Esophagus squamous epithelium (tissue), 5 donors: ENCODE measurements at regions of chr2 and their contacts with region 1.

Region 1: DNA sequence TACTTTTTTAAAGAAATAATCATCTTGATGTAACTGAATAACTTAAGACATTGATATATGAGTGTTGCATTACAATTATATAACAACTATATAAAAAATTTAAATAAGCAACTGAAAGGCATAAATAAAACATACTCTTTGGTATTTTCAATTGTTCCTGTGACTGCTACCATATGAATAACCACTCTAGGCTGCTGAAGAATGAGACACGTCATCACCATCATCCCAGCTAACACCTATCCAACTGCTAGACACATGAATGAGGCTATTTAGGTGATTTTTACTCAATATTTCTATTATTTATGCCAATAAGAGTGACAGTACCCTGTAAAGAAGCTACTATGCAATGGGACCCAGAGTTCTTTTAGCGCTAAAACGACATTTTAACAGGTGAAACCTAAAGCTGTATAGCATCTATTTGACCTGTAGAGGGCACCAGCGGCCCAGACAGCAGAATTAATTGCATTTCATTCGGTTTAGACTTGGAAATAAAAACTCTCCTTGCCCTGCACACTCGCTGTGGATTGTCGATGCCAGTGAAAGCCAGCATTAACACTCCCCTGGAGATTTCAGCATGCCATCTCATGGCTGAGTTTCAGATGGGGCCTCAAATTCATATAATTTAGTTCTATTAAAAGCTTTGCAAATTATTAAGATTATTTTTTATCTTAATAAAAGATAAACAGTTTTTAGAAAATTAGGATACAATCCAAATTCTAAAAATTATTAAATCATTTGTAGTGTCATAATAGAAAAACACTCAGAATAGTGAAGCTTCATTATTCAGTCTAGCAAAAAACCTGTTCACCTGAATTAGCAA is 89.4 kb upstream of the MAP2 start:
- DNase-seq: no peak
- H3K4me3 ChIP-seq: no peak overlapping the region
- H3K27ac ChIP-seq: no peak overlapping the region
- H3K4me1 ChIP-seq: peaks cover 0 to 5% (median 0%) of the 10 kb centered on the region in 3 donors
- H3K27me3 ChIP-seq: no peaks in the 10 kb centered on the region
- CTCF ChIP-seq: peak; percentile 27 to 88 (median 73)
- POLR2A ChIP-seq: no peak

Region 2: GRCh38 chr2:208847651-208848050 is 486.8 kb before region 1 on chr2:
- intact Hi-C with region 1: no loop called
- DNase-seq: no peak
- H3K4me3 ChIP-seq: no peak overlapping the region
- H3K27ac ChIP-seq: no peak overlapping the region
- H3K4me1 ChIP-seq: no peaks in the 10 kb centered on the region
- H3K27me3 ChIP-seq: no peaks in the 10 kb centered on the region
- CTCF ChIP-seq: no peak
- POLR2A ChIP-seq: no peak

Region 3: DNA sequence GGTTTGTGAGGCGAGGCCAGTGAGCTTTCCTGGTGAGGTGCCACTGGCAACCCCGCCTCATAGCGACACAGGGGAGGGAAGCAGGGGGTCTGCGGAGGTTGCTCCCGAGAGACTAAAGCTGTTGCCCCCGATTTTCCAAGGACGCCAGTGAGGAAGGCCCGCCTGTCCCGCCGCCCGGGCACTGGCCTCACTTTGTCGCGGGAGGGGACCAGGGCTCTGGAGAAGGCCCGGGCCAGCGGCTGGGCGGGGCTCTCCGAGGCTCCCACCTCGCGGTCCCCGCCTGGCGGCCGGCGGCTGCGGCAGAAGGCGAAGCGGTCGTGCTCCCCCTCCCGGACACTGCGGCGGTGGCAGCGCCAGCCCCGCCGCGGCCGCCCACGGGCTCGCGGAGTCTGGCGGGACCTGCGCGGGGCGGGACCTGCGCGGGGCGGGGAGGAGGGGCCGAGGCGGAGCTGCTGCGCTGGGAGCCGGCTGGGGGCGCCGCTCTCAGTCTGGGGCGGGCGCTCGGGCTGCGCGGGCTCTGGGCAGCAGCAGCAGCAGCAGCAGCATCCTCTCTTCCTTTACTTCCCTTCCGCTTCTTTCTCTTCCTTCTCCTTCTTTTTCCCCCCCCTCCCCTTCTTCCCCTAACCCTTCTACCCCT is 89.3 kb after region 1 on chr2 and contains the start of gene MAP2:
- intact Hi-C with region 1: loop called (anchors 5 kb)
- DNase-seq: no peak
- H3K4me3 ChIP-seq: peak within 1 kb of the TSS; percentile 53 to 69 (median 64)
- H3K27ac ChIP-seq: peak within 1 kb of the TSS; percentile 46 to 86 (median 76)
- H3K4me1 ChIP-seq: peaks cover 0 to 51% (median 16%) of the 10 kb centered on the region in 3 donors
- H3K27me3 ChIP-seq: no peaks in the 10 kb centered on the region
- CTCF ChIP-seq: peak; percentile 57 to 99 (median 94)
- POLR2A ChIP-seq: peak in 1 of 4 donors; percentile 62
- total RNA-seq, gene MAP2: 5.8 to 14.5 (median 8.8) TPM

Region 4: DNA sequence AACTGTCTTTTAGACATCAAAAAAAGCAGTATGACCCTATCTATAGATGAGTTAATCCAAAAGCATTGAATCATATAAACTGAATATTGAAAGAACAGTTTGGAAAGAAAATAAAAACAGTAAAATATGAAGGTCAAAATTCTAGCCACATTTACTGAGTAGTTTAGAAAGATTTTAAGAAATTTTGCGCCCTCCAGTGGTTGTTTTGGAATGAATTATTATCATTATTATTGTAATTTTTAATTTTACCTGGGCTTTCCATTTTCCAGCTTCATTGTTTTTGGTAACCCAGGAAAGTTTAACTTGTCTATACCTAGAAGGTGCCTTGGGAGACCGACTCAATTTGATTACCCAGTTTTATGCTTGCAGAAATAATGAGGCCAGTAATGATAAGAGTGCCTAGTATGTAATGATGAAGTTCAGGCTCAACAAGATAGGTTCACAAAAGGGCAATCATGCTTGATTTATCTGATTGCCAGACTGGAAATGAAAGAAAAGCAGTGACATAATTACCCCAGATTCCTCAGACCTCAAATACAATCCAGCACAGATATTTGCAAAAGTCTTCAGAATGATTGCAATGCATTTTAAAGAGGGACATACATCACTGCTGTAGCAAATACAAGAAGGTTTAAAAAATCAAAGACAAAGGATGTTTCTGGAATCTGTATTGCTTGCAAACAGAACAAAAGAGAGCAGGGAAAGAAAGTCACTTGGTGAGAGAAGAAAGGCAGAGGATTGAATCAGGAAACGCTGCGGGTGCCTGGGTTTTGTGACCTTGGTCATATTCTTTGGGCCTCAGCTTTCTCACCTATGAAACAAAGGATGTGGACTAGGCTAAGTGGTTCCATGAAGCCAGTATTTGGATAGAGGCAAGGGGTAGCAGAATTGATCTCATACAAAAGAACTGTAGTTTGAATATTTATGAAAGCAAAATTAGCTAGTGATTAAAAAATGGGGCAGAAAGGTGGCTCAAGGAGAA is 243.3 kb after region 1 on chr2:
- intact Hi-C with region 1: loop called (anchors 10 kb)
- DNase-seq: no peak
- H3K4me3 ChIP-seq: no peak overlapping the region
- H3K27ac ChIP-seq: no peak overlapping the region
- H3K4me1 ChIP-seq: no peaks in the 10 kb centered on the region
- H3K27me3 ChIP-seq: no peaks in the 10 kb centered on the region
- CTCF ChIP-seq: peak in 4 of 6 experiments; percentile 18 to 52 (median 20)
- POLR2A ChIP-seq: no peak